Calu3 (cell line): ENCODE measurements at regions of chr15 and their contacts with region 1.

Region 1: DNA sequence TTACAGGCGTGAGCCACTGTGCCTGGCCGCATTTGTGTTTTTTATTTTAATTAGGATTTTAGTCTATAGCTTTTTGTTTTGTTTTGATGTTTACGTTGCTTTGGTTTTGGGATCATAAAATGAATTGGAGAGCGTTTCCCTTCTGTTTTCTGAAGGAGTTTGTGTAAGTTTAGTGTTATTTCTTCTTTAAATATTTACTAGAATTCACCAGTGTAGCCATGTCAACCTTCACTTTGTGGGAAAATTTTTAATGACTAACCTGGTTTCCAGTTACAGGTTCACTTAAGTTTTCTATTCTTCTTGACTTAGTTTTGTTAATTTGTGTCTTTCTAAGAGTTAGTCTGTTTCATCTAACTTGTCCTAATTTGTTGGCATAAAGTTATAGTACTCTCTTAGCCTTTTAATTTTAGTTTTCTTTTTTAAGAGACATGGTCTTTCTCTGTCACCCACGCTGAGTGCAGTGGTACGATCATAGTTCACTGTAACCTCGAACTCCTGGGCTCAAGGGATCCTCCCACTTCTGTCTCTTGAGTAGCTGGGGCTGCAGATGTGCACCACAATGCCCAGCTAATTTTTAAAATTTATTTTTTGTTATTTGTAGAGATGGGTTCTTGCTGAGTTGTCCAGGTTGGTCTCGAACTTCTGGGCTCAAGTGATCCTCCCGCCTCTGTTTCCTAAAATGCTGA is 61.0 kb downstream of the CHD2 start:
- DNase-seq: no peak
- H3K4me3 Mint-ChIP-seq: no peak overlapping the region
- H3K27ac Mint-ChIP-seq: no peak overlapping the region
- H3K4me1 Mint-ChIP-seq: peaks cover 14% of the 10 kb centered on the region
- H3K27me3 Mint-ChIP-seq: no peaks in the 10 kb centered on the region
- CTCF ChIP-seq: no peak

Region 2: DNA sequence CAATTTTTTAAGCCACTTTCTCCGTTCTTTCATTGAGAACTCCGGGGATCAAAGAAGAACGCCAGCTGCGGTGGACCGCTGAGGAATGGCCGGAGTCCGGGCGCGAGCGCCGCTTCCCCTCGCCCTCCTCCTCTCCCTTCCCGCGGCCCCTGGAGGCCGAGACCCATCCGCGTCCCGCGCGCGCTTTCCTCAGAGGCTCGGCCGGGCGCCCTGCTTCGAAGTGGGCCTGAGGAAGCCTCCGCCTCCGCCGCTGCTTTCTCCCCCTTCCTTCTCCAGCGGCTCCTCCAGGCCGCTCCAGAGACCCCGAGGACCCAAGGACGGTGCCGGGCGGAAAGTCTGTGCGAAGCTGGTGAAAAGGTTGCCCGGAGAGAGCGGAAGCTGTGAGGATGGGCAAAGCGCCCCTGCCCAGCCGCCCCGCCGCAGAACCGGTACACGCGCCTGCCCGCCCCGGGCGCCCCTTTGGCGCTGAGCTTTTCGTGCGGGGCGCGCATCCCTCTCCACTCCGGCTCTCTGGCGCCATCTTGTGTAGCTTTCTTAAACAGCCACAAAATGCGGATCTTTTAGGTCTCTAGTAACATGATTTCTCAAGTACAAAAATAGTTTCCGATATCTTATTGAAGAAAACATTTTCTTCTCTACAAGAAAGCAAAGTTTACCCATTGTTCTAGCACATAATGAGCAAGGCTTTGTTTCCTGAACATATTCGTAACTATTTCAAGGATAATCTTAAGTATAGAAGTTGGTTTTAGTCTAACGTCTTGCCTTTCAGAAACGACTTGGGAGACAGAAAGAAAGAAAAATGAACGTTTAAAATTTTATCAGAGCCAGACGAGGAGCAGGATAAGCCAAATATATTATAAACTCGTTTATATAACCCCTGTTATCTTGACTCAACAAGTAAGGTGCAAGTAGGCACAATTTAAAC is 246.4 kb before region 1 on chr15:
- CTCF ChIA-PET with region 1: no interaction called
- intact Hi-C with region 1: no loop called
- DNase-seq: peak; percentile 81
- H3K4me3 Mint-ChIP-seq: peak overlapping the region; percentile 73
- H3K27ac Mint-ChIP-seq: no peak overlapping the region
- H3K4me1 Mint-ChIP-seq: peaks cover 8% of the 10 kb centered on the region
- H3K27me3 Mint-ChIP-seq: peaks cover 36% of the 10 kb centered on the region
- CTCF ChIP-seq: peak; percentile 87

Region 3: DNA sequence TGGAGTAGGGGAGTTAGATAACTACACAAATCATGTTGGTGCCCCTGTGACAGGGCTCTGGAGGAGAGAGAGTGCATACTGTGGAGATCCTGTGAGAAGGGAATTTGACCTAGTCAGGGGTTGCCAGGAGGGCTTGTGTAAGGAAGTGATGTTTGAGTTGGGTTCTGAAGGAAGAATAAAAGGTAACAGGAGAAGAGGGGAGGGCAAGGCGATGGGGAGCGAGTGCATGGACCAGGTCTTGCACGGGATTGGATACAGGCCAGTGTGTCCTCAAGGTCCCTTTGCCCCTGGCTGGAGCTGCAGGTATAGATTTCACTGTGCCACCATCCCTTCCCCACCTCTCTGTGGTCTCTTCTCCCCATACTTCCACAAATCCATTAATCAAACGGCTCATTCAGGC is 44.0 kb after region 1 on chr15:
- CTCF ChIA-PET with region 1: interaction called, 5 read pairs
- intact Hi-C with region 1: loop called (anchors 2 kb)
- DNase-seq: no peak
- H3K4me3 Mint-ChIP-seq: no peak overlapping the region
- H3K27ac Mint-ChIP-seq: no peak overlapping the region
- H3K4me1 Mint-ChIP-seq: no peaks in the 10 kb centered on the region
- H3K27me3 Mint-ChIP-seq: no peaks in the 10 kb centered on the region
- CTCF ChIP-seq: no peak